Prostate gland (tissue), 2 donors: ENCODE measurements at regions of chr3 and their contacts with region 1.

Region 1: DNA sequence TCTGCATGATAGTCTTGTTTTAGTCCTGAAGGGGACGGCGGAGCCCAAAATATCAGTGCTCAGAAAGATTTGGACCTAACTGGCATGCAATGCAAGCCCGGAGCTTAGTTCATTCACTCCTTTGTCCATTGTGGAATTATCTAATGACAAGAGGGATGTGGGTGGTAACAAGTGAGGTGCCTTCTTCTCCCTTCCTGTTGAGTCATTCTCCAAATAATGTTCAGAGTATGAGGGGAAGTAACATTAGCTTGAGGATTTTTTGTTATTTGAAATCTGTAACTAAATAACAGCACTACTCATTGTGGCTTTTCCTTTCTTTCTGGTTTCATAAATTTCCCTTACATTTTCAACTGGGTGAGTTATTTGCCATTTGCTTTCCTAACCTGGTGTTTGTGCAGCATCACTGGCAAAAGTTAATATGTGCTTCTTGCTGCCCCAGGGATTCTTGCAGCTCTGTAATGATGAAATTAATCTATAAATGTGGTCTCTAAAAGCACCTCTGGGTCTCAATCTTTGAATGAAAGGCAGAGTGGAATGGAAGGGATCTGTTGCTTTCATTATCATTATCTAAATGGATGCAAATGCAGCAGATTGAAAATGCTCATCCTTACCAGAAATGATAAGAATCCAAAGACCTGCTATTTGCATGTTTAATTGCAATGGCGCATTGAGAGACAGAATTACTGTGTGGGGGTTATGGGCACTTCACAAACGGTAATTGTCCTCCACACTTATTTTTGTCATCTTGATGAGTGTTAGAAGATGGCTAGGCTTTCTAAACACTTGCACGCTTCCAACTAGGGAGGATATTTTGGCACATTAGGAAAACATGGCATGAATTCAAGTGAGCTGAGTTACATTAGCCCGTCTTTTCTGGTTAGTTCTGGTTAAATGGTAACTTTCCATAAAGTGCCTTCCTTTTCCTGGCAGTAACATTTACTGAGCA is 89.9 kb upstream of the MITF start:
- DNase-seq: no peak
- H3K4me3 ChIP-seq: no peak overlapping the region
- H3K27ac ChIP-seq: no peak overlapping the region
- H3K4me1 ChIP-seq: no peaks in the 10 kb centered on the region
- H3K27me3 ChIP-seq: no peaks in the 10 kb centered on the region
- CTCF ChIP-seq: no peak
- POLR2A ChIP-seq: no peak

Region 2: DNA sequence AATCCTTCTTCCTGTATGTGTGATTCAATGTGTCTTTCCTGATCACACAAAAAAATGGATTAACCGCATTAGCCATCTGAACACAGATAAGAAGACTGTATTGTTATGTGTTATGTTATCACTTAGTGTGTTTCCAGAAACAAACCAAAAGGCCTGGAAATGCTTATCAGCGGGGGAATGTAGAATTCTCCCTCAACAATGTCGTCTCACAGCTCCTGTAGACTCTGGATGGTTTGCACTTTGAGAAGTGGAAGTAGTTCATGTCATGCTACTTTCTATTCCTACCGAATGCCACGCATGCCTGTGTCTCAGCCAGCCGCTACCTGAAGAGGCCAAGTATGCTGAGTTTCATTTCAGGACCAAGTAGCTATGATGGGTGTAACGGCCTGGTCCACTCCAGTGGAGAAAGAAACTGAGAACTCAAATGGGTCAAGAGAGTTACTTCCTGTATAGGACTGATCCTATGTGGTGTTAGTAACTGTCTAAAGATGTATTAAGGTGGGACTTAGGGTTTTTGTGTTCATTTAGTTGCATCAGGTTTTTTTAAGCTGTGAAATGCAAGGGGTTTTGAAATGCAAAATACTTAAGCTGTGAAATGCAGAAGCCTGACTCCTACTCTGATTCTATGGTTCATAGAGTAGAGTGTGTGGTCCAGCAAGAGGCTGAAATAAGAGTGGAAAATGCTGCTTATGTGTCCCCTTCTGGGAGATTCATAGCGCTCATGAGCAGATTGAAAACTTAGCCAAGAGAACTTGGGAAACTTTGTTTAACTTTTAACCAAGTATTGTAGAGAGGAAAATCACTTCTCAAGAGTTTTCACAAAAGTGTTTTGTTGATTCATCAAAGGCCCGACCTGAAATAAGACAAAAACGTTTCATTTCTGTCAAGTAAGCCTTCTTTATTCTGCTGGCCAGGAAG is 408.5 kb before region 1 on chr3:
- intact Hi-C with region 1: no loop called
- DNase-seq: no peak
- H3K4me3 ChIP-seq: no peak overlapping the region
- H3K27ac ChIP-seq: no peak overlapping the region
- H3K4me1 ChIP-seq: no peaks in the 10 kb centered on the region
- H3K27me3 ChIP-seq: no peaks in the 10 kb centered on the region
- CTCF ChIP-seq: no peak
- POLR2A ChIP-seq: no peak

Region 3: GRCh38 chr3:69410250-69410649 is 239.1 kb before region 1 on chr3:
- intact Hi-C with region 1: no loop called
- DNase-seq: peak; percentile 56
- H3K4me3 ChIP-seq: no peak overlapping the region
- H3K27ac ChIP-seq: no peak overlapping the region
- H3K4me1 ChIP-seq: no peaks in the 10 kb centered on the region
- H3K27me3 ChIP-seq: no peaks in the 10 kb centered on the region
- CTCF ChIP-seq: peak in 3 of 4 experiments; percentile 58 to 75 (median 67)
- POLR2A ChIP-seq: no peak

Region 4: GRCh38 chr3:69560818-69561217 is 88.6 kb before region 1 on chr3:
- intact Hi-C with region 1: loop called (anchors 5 kb)
- DNase-seq: no peak
- H3K4me3 ChIP-seq: no peak overlapping the region
- H3K27ac ChIP-seq: no peak overlapping the region
- H3K4me1 ChIP-seq: no peaks in the 10 kb centered on the region
- H3K27me3 ChIP-seq: no peaks in the 10 kb centered on the region
- CTCF ChIP-seq: no peak
- POLR2A ChIP-seq: no peak

Region 5: DNA sequence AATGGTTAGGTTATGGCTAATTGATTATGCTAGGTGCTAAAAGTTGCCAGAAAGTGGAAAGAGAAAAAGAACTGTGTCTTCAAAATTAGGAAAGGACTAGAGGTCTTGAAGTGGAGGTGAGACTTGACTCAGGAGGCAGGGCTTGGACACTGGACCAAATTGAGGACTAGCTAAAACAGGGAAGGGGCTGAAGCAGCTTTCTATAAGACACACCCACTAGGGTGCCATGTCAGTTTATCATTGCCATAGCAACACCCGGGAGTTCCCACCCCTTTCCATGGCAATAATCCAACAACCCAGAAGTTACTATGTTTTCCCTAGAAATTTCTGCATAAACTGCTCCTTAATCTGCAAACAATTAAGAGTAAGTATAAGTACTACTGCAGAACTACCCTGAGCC is 47.0 kb after region 1 on chr3:
- intact Hi-C with region 1: no loop called
- DNase-seq: no peak
- H3K4me3 ChIP-seq: no peak overlapping the region
- H3K27ac ChIP-seq: no peak overlapping the region
- H3K4me1 ChIP-seq: no peaks in the 10 kb centered on the region
- H3K27me3 ChIP-seq: no peaks in the 10 kb centered on the region
- CTCF ChIP-seq: no peak
- POLR2A ChIP-seq: no peak